Activated naive CD4-positive, alpha-beta T cell treated with anti-CD3 and anti-CD28 coated beads for 36 hours (primary cell): ENCODE measurements at regions of chr7 and their contacts with region 1.

Region 1: DNA sequence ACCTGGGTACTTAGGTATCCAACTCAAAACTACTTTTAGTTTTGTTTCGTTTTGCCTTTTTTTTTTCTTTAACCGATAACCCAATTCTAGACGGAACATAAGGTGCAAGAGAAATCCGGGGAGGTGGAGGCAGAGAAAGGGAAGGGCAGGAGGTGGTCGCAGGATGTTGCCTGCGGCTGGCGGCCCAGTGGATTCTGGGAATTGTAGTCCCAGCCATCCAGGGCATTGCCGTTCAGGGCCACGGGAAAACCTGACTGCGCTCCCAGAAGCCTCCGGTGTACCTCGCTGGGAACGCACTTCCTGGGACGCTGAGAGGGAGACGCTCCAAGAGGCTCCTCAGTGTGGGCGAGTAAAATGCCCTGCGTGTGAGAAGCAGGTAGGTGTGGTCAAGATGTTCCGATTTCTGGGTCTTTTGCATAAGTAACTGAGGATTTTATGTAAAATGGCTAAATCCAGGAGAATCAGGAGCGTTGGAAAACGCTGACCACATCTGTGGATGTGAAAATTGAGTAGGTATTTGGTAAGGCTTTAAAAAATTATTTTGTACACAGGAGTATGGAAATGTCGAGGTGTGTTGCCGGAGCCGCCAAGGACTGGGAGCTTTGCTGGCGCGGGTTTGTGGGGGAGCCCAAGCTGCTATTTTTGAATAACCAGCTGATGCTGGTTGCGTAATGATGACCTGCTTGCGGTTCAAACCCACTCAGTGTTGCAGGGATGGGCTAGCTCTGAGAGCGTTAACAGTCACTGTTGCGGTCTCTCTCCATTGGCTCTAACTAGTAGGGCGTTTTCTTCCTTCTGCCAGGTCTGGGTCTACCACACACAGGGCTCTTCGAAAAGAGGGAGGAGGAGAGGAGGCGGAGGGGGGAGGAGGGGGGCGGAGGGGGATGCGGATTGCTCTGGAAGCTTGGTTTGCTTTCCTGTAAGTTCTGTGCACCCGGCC is at the start of gene CLDN12:
- DNase-seq: peak; percentile 95
- H3K4me3 Mint-ChIP-seq: peak within 1 kb of the TSS; percentile 95
- H3K27ac Mint-ChIP-seq: peak within 1 kb of the TSS; percentile 97
- H3K4me1 Mint-ChIP-seq: peaks cover 4% of the 10 kb centered on the region
- H3K27me3 Mint-ChIP-seq: no peaks in the 10 kb centered on the region
- total RNA-seq, gene CLDN12: 14.8 to 15.3 TPM

Region 2: DNA sequence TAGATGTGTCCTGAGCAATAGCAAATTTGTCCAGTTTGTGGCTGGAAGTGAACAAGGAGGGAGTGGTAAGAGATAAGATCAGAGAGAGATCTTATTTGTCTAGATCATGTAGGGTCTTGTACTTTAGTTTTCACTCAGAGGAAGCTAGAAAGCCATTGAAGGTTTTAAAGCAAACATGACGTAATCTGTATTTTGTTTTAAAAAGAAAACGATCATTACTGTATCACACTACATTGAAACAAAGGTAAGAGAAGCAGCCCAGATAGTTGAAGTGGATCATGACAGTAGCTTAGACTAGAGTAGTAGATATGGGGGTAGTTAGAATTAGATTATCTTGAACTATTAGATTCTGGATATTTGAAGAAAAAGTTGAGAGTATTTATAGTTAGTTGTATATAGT is 1667.5 kb before region 1 on chr7:
- CTCF ChIA-PET with region 1: no interaction called
- intact Hi-C with region 1: no loop called
- DNase-seq: no peak
- H3K4me3 Mint-ChIP-seq: no peak overlapping the region
- H3K27ac Mint-ChIP-seq: no peak overlapping the region
- H3K4me1 Mint-ChIP-seq: no peaks in the 10 kb centered on the region
- H3K27me3 Mint-ChIP-seq: peaks cover 13% of the 10 kb centered on the region

Region 3: GRCh38 chr7:90155206-90155605 is 248.2 kb before region 1 on chr7:
- CTCF ChIA-PET with region 1: no interaction called
- intact Hi-C with region 1: loop called (anchors 1 kb)
- DNase-seq: no peak
- H3K4me3 Mint-ChIP-seq: no peak overlapping the region
- H3K27ac Mint-ChIP-seq: no peak overlapping the region
- H3K4me1 Mint-ChIP-seq: peaks cover 3% of the 10 kb centered on the region
- H3K27me3 Mint-ChIP-seq: peaks cover 23% of the 10 kb centered on the region

Region 4: GRCh38 chr7:90244909-90245851 is 158.3 kb before region 1 on chr7 and contains the start of gene CFAP69:
- CTCF ChIA-PET with region 1: no interaction called
- intact Hi-C with region 1: loop called (anchors 1 kb)
- DNase-seq: peak; percentile 91
- H3K4me3 Mint-ChIP-seq: peak within 1 kb of the TSS; percentile 97
- H3K27ac Mint-ChIP-seq: no peak within 1 kb of the TSS
- H3K4me1 Mint-ChIP-seq: peaks cover 17% of the 10 kb centered on the region
- H3K27me3 Mint-ChIP-seq: peaks cover 24% of the 10 kb centered on the region
- total RNA-seq, gene CFAP69: 0.25 to 0.31 TPM

Region 5: GRCh38 chr7:90595801-90596671 is 192.6 kb after region 1 on chr7 and contains the start of gene CDK14:
- CTCF ChIA-PET with region 1: no interaction called
- intact Hi-C with region 1: loop called (anchors 2 kb)
- DNase-seq: peak; percentile 64
- H3K4me3 Mint-ChIP-seq: peak within 1 kb of the TSS; percentile 77
- H3K27ac Mint-ChIP-seq: no peak within 1 kb of the TSS
- H3K4me1 Mint-ChIP-seq: peaks cover 18% of the 10 kb centered on the region
- H3K27me3 Mint-ChIP-seq: peaks cover 56% of the 10 kb centered on the region
- total RNA-seq, gene CDK14: 0.42 to 0.81 TPM

Region 6: DNA sequence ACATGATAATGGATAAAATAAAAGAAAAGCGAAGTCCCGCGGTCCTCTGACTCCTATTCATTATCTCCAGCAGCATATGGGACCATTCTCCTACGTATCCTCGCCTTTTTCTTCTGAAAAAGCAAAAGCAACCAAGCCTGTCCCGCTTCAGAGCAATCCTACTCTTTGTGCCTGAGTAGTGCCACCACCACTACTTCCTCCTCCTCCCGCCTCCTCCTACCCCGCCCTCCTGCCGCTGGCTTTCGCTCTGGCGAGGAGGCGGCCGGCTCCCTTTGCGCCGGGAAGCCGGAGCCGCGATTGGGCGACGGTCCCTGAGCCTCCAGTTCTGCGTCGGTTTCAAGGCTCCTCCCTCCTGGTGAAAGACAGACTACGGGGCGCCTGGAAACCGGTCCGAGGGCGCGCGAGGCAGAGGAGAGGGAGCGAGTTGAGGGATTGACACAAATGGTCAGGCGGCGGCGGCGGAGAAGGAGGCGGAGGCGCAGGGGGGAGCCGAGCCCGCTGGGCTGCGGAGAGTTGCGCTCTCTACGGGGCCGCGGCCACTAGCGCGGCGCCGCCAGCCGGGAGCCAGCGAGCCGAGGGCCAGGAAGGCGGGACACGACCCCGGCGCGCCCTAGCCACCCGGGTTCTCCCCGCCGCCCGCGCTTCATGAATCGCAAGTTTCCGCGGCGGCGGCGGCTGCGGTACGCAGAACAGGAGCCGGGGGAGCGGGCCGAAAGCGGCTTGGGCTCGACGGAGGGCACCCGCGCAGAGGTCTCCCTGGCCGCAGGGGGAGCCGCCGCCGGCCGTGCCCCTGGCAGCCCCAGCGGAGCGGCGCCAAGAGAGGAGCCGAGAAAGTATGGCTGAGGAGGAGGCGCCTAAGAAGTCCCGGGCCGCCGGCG is 860.8 kb after region 1 on chr7 and contains the start of gene FZD1:
- CTCF ChIA-PET with region 1: no interaction called
- intact Hi-C with region 1: loop called (anchors 1 kb)
- DNase-seq: peak; percentile 85
- H3K4me3 Mint-ChIP-seq: peak within 1 kb of the TSS; percentile 82
- H3K27ac Mint-ChIP-seq: no peak within 1 kb of the TSS
- H3K4me1 Mint-ChIP-seq: peaks cover 8% of the 10 kb centered on the region
- H3K27me3 Mint-ChIP-seq: peaks cover 53% of the 10 kb centered on the region
- total RNA-seq, gene FZD1: 0.29 to 0.30 TPM